ENCODE measurements at regions of chr15 and their contacts with region 1.

Region 1: GRCh38 chr15:39580117-39580484 is 778 bp upstream of the THBS1 start:
- DNase-seq: peak; percentile 95
- H3K4me3 ChIP-seq: peak overlapping the region; percentile 55 to 83 (median 57)
- H3K27ac ChIP-seq: peak overlapping the region; percentile 86 to 97 (median 95)
- H3K4me1 ChIP-seq: peaks cover under 1 to 51% (median 36%) of the 10 kb centered on the region in 4 donors
- H3K27me3 ChIP-seq: no peaks in the 10 kb centered on the region
- CTCF ChIP-seq: peak; percentile 95 to 100 (median 98)
- EP300 ChIP-seq: no peak
- POLR2A ChIP-seq: no peak

Region 2: GRCh38 chr15:38817427-38818156 is 762.5 kb before region 1 on chr15:
- in situ Hi-C with region 1: loop called in 2 of 4 experiments (anchors 10 kb)
- intact Hi-C with region 1: loop called (anchors 2 kb)
- DNase-seq: peak; percentile 90
- H3K4me3 ChIP-seq: no peak overlapping the region
- H3K27ac ChIP-seq: no peak overlapping the region
- H3K4me1 ChIP-seq: peaks cover 0 to 9% (median 0%) of the 10 kb centered on the region in 4 donors
- H3K27me3 ChIP-seq: no peaks in the 10 kb centered on the region
- CTCF ChIP-seq: peak; percentile 99
- EP300 ChIP-seq: no peak
- POLR2A ChIP-seq: no peak

Region 3: GRCh38 chr15:39301589-39301999 is 278.5 kb before region 1 on chr15:
- in situ Hi-C with region 1: loop called in 2 of 4 experiments (anchors 10 kb)
- intact Hi-C with region 1: no loop called
- DNase-seq: no peak
- H3K4me3 ChIP-seq: no peak overlapping the region
- H3K27ac ChIP-seq: peak overlapping the region in 3 of 4 donors; percentile 4 to 17 (median 8)
- H3K4me1 ChIP-seq: no peaks in the 10 kb centered on the region
- H3K27me3 ChIP-seq: no peaks in the 10 kb centered on the region
- CTCF ChIP-seq: no peak
- EP300 ChIP-seq: no peak
- POLR2A ChIP-seq: no peak

Region 4: DNA sequence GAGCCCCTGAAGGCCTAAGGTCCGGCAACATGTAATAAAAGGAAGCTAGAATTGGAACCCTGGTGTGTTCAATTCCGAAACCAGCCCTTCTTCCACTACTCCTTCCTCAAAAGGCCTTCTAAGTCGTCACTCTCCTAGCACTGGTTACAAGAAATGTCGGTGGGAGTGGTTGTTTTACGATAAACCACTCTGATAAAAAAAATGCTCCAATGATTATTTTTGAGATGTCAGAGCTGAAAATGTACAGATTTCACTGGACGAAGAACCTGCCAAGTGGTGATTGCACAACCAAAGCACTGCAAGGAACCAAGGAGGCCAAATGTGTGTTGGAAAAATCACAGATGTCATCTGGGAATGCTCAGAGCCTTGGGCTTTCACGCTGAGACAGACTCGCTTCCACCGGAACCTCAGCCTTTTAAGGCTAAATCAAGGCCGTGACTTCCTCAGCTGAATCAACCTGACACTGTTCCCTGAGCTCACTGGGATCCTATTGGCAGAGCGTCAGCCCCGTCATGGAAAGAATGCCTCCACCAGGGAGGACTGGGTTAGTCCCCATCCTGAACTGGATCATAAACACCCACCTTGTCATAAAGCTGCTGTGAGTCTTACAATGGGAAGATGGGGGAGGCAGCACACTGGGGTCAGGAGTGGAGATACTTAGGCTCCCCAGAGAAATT is 107.3 kb before region 1 on chr15:
- in situ Hi-C with region 1: no loop called
- intact Hi-C with region 1: loop called (anchors 5 kb)
- DNase-seq: peak; percentile 81
- H3K4me3 ChIP-seq: no peak overlapping the region
- H3K27ac ChIP-seq: peak overlapping the region; percentile 82 to 92 (median 85)
- H3K4me1 ChIP-seq: peaks cover 4 to 22% (median 9%) of the 10 kb centered on the region in 4 donors
- H3K27me3 ChIP-seq: no peaks in the 10 kb centered on the region
- CTCF ChIP-seq: no peak
- EP300 ChIP-seq: peak; percentile 97
- POLR2A ChIP-seq: no peak

Region 5: GRCh38 chr15:39767921-39768320 is 187.8 kb after region 1 on chr15:
- in situ Hi-C with region 1: loop called in 3 of 4 experiments (anchors 10 to 25 kb)
- intact Hi-C with region 1: no loop called
- DNase-seq: no peak
- H3K4me3 ChIP-seq: no peak overlapping the region
- H3K27ac ChIP-seq: no peak overlapping the region
- H3K4me1 ChIP-seq: peaks cover 0 to 9% (median 7%) of the 10 kb centered on the region in 4 donors
- H3K27me3 ChIP-seq: no peaks in the 10 kb centered on the region
- CTCF ChIP-seq: no peak
- EP300 ChIP-seq: no peak
- POLR2A ChIP-seq: no peak

Region 6: GRCh38 chr15:39852250-39852649 is 272.1 kb after region 1 on chr15:
- in situ Hi-C with region 1: no loop called
- intact Hi-C with region 1: no loop called
- DNase-seq: no peak
- H3K4me3 ChIP-seq: no peak overlapping the region
- H3K27ac ChIP-seq: no peak overlapping the region
- H3K4me1 ChIP-seq: no peaks in the 10 kb centered on the region
- H3K27me3 ChIP-seq: no peaks in the 10 kb centered on the region
- CTCF ChIP-seq: no peak
- EP300 ChIP-seq: no peak
- POLR2A ChIP-seq: no peak

Measured in transverse colon (tissue), 4 donors.